ENCODE measurements at regions of chr9 and their contacts with region 1.

Region 1: GRCh38 chr9:119689879-119690278 is 320.6 kb upstream of the BRINP1 start:
- DNase-seq: no peak
- H3K4me3 ChIP-seq: no peak overlapping the region
- H3K27ac ChIP-seq: peak overlapping the region in 19 of 59 donors; percentile 3 to 58 (median 29)
- H3K27me3 ChIP-seq: peaks cover 0 to 3% (median 0%) of the 10 kb centered on the region in 45 donors
- CTCF ChIP-seq: no peak

Region 2: DNA sequence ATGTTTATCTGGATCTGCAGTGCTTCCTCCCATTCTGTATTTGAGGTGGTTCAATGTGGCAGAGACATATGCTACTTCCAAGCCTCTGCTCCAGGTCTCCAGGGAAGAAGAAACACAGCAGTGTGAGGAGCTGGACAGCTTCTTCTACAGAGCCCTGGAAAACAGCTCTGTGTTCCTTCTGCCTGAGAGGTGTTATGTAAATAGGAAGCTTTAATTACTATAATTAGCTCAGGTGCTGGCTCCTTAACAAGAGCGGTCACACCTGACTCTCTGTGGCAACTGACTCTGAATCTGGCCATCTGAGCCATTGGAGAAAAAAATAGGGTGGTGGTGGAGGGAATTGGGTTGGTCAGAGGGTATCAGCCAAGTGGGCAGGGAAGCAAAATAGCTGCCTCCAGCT is 11.8 kb after region 1 on chr9:
- intact Hi-C with region 1: loop called in 1 of 2 experiments (anchors 2 kb)
- DNase-seq: peak in 1 of 10 donors; percentile 54
- H3K4me3 ChIP-seq: no peak overlapping the region
- H3K27ac ChIP-seq: peak overlapping the region in 1 of 59 donors; percentile 40
- H3K27me3 ChIP-seq: no peaks in the 10 kb centered on the region
- CTCF ChIP-seq: no peak